Activated naive CD4-positive, alpha-beta T cell treated with anti-CD3 and anti-CD28 coated beads for 36 hours (primary cell): ENCODE measurements at regions of chr1 and their contacts with region 1.

Region 1: DNA sequence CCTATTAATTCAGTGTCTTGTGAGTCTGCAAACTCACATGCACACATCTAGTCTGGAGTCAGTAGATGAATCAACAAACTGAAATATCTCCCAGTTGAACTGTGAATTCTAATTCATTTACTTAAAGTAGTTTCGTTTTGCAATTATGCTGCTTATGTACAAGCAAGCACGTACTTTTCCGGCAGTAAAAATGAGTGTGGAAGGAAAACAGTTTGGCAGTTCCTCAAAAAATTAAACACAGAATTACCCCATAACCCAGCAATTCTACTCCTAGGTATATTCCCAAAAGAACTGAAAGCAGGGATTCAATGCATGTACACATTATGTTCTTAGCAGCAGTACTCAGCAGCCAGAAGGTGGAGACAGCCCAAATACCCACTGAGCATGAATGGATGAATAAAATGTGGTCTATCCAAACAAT is 49.3 kb downstream of the GNB1 start:
- DNase-seq: no peak
- H3K4me3 Mint-ChIP-seq: peak overlapping the region; percentile 28
- H3K27ac Mint-ChIP-seq: peak overlapping the region; percentile 68
- H3K4me1 Mint-ChIP-seq: peaks cover 49% of the 10 kb centered on the region
- H3K27me3 Mint-ChIP-seq: no peaks in the 10 kb centered on the region

Region 2: DNA sequence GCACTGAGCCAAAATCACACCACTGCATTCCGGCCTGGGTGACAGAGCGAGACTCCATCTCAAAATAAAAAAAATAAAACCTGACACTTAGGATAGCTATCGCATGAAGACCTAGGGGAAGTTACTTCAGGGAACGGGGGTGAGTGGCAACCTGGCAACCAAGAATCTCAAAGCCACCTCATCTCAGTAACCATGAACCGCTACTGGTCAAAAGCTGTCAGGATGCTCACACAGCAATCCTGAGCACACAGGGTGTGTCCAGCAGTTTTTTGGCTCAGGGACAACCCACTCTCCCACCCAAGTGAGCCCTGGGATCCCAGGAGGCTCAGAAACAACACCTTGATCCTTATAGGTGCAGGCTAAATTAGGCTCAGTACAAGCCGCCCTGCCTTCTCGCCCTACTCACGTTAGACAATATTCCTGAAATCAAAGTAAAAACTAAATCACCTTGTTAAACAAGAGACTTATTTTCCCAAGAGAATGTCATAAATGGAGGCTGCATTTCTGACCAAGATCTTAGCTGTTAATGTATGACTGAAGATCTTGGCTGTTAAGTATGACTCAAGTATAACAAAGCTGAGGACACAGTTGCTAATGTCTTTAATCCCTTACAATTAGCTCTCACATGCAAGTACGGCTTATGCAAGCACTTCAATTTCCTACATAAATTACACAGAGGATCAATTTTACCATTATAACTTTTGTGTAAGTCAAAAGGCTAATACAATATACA is 15.1 kb before region 1 on chr1:
- CTCF ChIA-PET with region 1: no interaction called
- intact Hi-C with region 1: loop called (anchors 1 kb)
- DNase-seq: no peak
- H3K4me3 Mint-ChIP-seq: no peak overlapping the region
- H3K27ac Mint-ChIP-seq: peak overlapping the region; percentile 24
- H3K4me1 Mint-ChIP-seq: peaks cover 37% of the 10 kb centered on the region
- H3K27me3 Mint-ChIP-seq: no peaks in the 10 kb centered on the region